ENCODE measurements at regions of chr18 and their contacts with region 1.

Region 1: GRCh38 chr18:71131918-71132317 is 843.1 kb downstream of the SOCS6 start:
- DNase-seq: no peak
- H3K4me3 ChIP-seq: no peak overlapping the region
- H3K27ac ChIP-seq: no peak overlapping the region
- H3K4me1 ChIP-seq: peaks cover 0 to 10% (median 3%) of the 10 kb centered on the region in 4 donors
- H3K27me3 ChIP-seq: no peaks in the 10 kb centered on the region
- CTCF ChIP-seq: no peak

Region 2: DNA sequence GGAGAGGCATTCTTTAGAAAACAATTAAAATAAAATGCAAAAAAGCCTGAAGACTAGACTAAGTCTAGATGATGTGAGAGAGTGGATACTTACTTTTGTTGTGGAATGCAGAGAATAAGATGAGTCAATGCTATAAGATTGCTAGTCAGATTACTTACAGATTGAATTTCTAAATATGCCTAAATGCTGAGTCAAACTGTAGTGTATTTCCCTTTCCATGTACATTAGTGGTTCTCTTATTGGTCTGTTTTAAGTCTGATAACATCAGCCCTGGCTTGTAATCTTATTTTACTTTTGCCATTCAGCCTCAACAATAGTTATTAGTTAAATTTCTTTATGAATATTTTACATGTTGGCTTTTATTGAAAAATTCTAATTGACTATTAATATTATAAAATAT is 140.3 kb before region 1 on chr18:
- intact Hi-C with region 1: no loop called
- DNase-seq: no peak
- H3K4me3 ChIP-seq: no peak overlapping the region
- H3K27ac ChIP-seq: no peak overlapping the region
- H3K4me1 ChIP-seq: no peaks in the 10 kb centered on the region
- H3K27me3 ChIP-seq: no peaks in the 10 kb centered on the region
- CTCF ChIP-seq: no peak

Region 3: GRCh38 chr18:71040161-71040560 is 91.8 kb before region 1 on chr18:
- intact Hi-C with region 1: no loop called
- DNase-seq: no peak
- H3K4me3 ChIP-seq: no peak overlapping the region
- H3K27ac ChIP-seq: no peak overlapping the region
- H3K4me1 ChIP-seq: no peaks in the 10 kb centered on the region
- H3K27me3 ChIP-seq: no peaks in the 10 kb centered on the region
- CTCF ChIP-seq: no peak

Region 4: GRCh38 chr18:71371951-71372605 is 240.2 kb after region 1 on chr18:
- intact Hi-C with region 1: loop called (anchors 5 kb)
- DNase-seq: no peak
- H3K4me3 ChIP-seq: no peak overlapping the region
- H3K27ac ChIP-seq: no peak overlapping the region
- H3K4me1 ChIP-seq: no peaks in the 10 kb centered on the region
- H3K27me3 ChIP-seq: no peaks in the 10 kb centered on the region
- CTCF ChIP-seq: no peak

Measured in tibial artery (tissue), 4 donors.